IMR-90 (cell line): ENCODE measurements at regions of chr14 and their contacts with region 1.

Region 1: DNA sequence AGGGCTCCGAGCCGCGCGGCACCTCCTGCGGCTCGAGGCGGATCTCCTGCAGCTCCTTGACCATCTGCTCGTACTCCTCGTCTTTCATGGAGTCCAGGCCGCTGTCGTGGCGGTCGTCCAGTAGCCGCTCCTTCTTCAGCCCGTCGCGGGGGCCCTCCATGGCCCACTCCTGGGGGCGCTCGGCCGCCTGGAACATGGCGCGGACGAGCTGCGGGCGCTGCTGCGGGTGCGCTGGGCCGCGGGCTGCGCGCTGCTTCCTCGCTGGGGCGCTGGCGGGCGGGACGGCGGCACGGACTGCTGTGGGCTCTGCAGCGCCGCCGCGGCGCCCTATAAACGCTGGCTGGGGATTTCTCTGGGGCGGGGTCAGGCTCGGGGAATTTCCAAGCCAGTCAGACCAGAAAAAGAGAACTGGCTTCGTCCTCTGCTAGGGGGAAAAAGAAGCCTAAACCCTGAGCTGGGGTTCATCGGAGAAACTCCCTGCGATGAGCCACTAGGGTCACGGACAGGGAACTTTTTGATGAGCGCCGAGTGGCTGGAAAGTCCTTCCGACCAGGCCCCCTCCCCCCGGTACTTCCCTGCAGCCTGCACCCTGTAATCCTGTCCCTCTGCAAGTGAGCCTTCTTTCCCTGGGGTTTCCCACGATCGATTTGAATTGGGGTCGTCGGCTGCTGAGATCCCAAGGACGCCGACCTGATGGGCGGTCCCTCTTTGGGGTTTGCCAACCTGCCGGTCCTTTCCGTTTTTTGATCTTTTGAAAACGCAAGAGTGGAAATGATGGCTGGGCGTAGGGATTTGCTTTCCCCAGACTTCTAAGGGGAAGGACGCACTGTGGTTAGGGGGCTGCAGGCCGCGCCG is at the start of gene NFKBIA:
- DNase-seq: peak; percentile 88
- ATAC-seq: peak; percentile 82
- H3K4me3 ChIP-seq: peak within 1 kb of the TSS; percentile 95
- H3K27ac ChIP-seq: peak within 1 kb of the TSS; percentile 99
- H3K4me1 ChIP-seq: peaks cover 15% of the 10 kb centered on the region
- H3K27me3 ChIP-seq: no peaks in the 10 kb centered on the region
- CTCF ChIP-seq: peak; percentile 57
- POLR2A ChIP-seq: peak; percentile 99
- RAD21 ChIP-seq: peak; percentile 38
- total RNA-seq, gene NFKBIA: 97.1 and 102 TPM in 2 replicates

Region 2: GRCh38 chr14:35140718-35141581 is 263.7 kb before region 1 on chr14:
- CTCF ChIA-PET with region 1: no interaction called
- POLR2A ChIA-PET with region 1: no interaction called
- dilution Hi-C with region 1: no loop called
- in situ Hi-C with region 1: no loop called
- intact Hi-C with region 1: loop called (anchors 1 kb)
- DNase-seq: peak; percentile 52
- ATAC-seq: peak; percentile 62; the same call in 1 of the 2 replicates
- H3K4me3 ChIP-seq: no peak overlapping the region
- H3K27ac ChIP-seq: no peak overlapping the region
- H3K4me1 ChIP-seq: no peaks in the 10 kb centered on the region
- H3K27me3 ChIP-seq: no peaks in the 10 kb centered on the region
- CTCF ChIP-seq: peak; percentile 62
- POLR2A ChIP-seq: no peak
- RAD21 ChIP-seq: peak; percentile 64

Region 3: GRCh38 chr14:35292051-35292769 is 112.5 kb before region 1 on chr14 and contains the start of gene PSMA6:
- CTCF ChIA-PET with region 1: interaction called, 3 read pairs
- POLR2A ChIA-PET with region 1: interaction called, 6 read pairs
- dilution Hi-C with region 1: no loop called
- in situ Hi-C with region 1: loop called (anchors 10 kb)
- intact Hi-C with region 1: loop called (anchors 1 kb)
- DNase-seq: peak; percentile 99
- ATAC-seq: peak; percentile 98
- H3K4me3 ChIP-seq: peak within 1 kb of the TSS; percentile 74
- H3K27ac ChIP-seq: peak within 1 kb of the TSS; percentile 90
- H3K4me1 ChIP-seq: peaks cover 2% of the 10 kb centered on the region
- H3K27me3 ChIP-seq: no peaks in the 10 kb centered on the region
- CTCF ChIP-seq: no peak
- POLR2A ChIP-seq: peak; percentile 85
- RAD21 ChIP-seq: peak; percentile 17; the same call in 1 of the 2 replicates
- total RNA-seq, gene PSMA6: 435 and 530 TPM in 2 replicates

Region 4: GRCh38 chr14:35336494-35337268 is 68.0 kb before region 1 on chr14:
- CTCF ChIA-PET with region 1: no interaction called
- POLR2A ChIA-PET with region 1: interaction called, 4 read pairs
- dilution Hi-C with region 1: no loop called
- in situ Hi-C with region 1: no loop called
- intact Hi-C with region 1: loop called (anchors 1 kb)
- DNase-seq: peak; percentile 85
- ATAC-seq: peak; percentile 63
- H3K4me3 ChIP-seq: no peak overlapping the region
- H3K27ac ChIP-seq: peak overlapping the region; percentile 83
- H3K4me1 ChIP-seq: peaks cover 32% of the 10 kb centered on the region
- H3K27me3 ChIP-seq: no peaks in the 10 kb centered on the region
- CTCF ChIP-seq: no peak
- POLR2A ChIP-seq: no peak
- RAD21 ChIP-seq: no peak

Region 5: DNA sequence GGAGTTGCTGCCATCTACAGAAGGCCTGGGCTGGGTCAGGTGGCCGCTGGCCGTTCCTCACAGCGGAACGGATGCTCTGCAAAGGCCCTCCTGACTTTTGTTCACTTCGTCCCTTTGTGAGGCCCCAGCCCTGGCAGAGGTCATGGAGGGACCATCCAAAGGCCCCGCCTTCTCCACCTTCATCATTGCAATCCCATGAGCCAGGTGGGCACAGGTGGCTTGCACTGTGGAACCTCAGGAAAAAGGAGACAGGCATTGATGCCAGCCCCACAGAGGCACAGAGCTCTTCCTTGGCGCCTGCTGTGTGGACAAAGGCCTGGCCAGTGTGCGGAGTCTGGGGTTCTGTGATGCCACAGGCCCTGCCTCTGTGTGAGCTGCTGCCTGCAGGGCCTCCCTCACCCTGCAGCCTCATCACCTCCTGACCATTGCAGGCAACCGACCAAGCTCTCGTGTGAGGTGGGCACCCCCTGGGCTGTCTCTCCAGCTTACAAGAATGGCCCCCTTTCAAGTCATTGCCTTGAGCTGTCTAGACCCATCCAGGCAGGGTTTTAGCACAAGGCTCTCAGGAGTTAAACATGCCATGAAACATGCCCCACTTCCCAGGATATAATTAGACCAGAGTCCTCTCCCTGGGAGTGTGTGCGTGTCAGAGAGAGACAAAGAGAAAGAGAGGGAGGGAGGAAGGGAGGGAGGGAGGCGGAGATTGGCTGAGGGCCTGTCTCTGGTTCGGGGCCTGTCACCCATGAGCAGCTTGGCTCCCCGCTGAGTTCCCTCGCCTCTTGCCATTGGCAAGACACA is 19.4 kb before region 1 on chr14:
- CTCF ChIA-PET with region 1: interaction called, 3 read pairs
- POLR2A ChIA-PET with region 1: no interaction called
- dilution Hi-C with region 1: no loop called
- in situ Hi-C with region 1: no loop called
- intact Hi-C with region 1: loop called (anchors 1 kb)
- DNase-seq: peak; percentile 93
- ATAC-seq: peak; percentile 88
- H3K4me3 ChIP-seq: no peak overlapping the region
- H3K27ac ChIP-seq: peak overlapping the region; percentile 89
- H3K4me1 ChIP-seq: peaks cover 21% of the 10 kb centered on the region
- H3K27me3 ChIP-seq: no peaks in the 10 kb centered on the region
- CTCF ChIP-seq: no peak
- POLR2A ChIP-seq: peak; percentile 46
- RAD21 ChIP-seq: no peak